ENCODE measurements at regions of chr14 and their contacts with region 1.

Region 1: GRCh38 chr14:60275942-60276341 is 26.9 kb downstream of the PPM1A start:
- DNase-seq: peak; percentile 56
- ATAC-seq: peak; percentile 60
- H3K4me3 ChIP-seq: no peak overlapping the region
- H3K27ac ChIP-seq: no peak overlapping the region
- H3K4me1 ChIP-seq: peaks cover 55% of the 10 kb centered on the region
- H3K27me3 ChIP-seq: no peaks in the 10 kb centered on the region
- CTCF ChIP-seq: no peak
- EP300 ChIP-seq: no peak
- POLR2A ChIP-seq: no peak
- RAD21 ChIP-seq: no peak

Region 2: GRCh38 chr14:60288279-60288678 is 12.3 kb after region 1 on chr14:
- CTCF ChIA-PET with region 1: no interaction called
- POLR2A ChIA-PET with region 1: no interaction called
- in situ Hi-C with region 1: no loop called
- intact Hi-C with region 1: loop called (anchors 1 kb)
- DNase-seq: no peak
- ATAC-seq: no peak
- H3K4me3 ChIP-seq: no peak overlapping the region
- H3K27ac ChIP-seq: no peak overlapping the region
- H3K4me1 ChIP-seq: no peaks in the 10 kb centered on the region
- H3K27me3 ChIP-seq: no peaks in the 10 kb centered on the region
- CTCF ChIP-seq: no peak
- EP300 ChIP-seq: no peak
- POLR2A ChIP-seq: no peak
- RAD21 ChIP-seq: no peak

Measured in HepG2 (cell line).